Activated CD8-positive, alpha-beta T cell treated with anti-CD3 and anti-CD28 coated beads for 36 hours (primary cell): ENCODE measurements at regions of chr2 and their contacts with region 1.

Region 1: GRCh38 chr2:197168705-197169104 is 141.9 kb downstream of the ANKRD44 start:
- DNase-seq: peak; percentile 88
- ATAC-seq: peak; percentile 86
- H3K4me3 Mint-ChIP-seq: no peak overlapping the region
- H3K27ac Mint-ChIP-seq: peak overlapping the region; percentile 71
- H3K4me1 Mint-ChIP-seq: peaks cover 61% of the 10 kb centered on the region
- H3K27me3 Mint-ChIP-seq: no peaks in the 10 kb centered on the region
- CTCF ChIP-seq: peak; percentile 68

Region 2: GRCh38 chr2:197128126-197128525 is 40.6 kb before region 1 on chr2:
- CTCF ChIA-PET with region 1: interaction called, 39 read pairs
- POLR2A ChIA-PET with region 1: interaction called, 3 read pairs
- intact Hi-C with region 1: no loop called
- DNase-seq: no peak
- ATAC-seq: no peak
- H3K4me3 Mint-ChIP-seq: no peak overlapping the region
- H3K27ac Mint-ChIP-seq: peak overlapping the region; percentile 75
- H3K4me1 Mint-ChIP-seq: peaks cover 64% of the 10 kb centered on the region
- H3K27me3 Mint-ChIP-seq: no peaks in the 10 kb centered on the region
- CTCF ChIP-seq: no peak

Region 3: DNA sequence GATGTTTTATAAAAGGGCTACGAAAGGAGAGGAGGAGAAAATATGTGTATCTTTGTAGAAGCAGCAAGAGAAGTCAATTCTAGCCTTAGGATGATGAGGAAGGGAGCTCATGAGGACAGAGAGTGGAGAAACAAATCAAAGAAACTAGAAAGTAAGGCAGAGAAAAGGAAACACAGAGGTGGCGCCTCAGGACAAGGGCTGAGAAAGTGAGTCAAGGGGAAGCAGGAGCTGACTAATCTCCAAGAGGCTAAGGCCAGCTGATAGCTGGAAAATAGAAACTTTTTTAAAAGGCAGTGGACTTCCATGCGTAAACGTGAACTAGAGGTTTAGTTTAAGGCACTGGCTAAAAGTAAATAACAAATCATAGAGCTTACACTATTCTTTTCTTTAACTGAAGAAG is 31.5 kb before region 1 on chr2:
- CTCF ChIA-PET with region 1: interaction called, 39 read pairs
- POLR2A ChIA-PET with region 1: interaction called, 4 read pairs
- intact Hi-C with region 1: no loop called
- DNase-seq: no peak
- ATAC-seq: no peak
- H3K4me3 Mint-ChIP-seq: no peak overlapping the region
- H3K27ac Mint-ChIP-seq: peak overlapping the region; percentile 88
- H3K4me1 Mint-ChIP-seq: peaks cover 89% of the 10 kb centered on the region
- H3K27me3 Mint-ChIP-seq: no peaks in the 10 kb centered on the region
- CTCF ChIP-seq: no peak

Region 4: DNA sequence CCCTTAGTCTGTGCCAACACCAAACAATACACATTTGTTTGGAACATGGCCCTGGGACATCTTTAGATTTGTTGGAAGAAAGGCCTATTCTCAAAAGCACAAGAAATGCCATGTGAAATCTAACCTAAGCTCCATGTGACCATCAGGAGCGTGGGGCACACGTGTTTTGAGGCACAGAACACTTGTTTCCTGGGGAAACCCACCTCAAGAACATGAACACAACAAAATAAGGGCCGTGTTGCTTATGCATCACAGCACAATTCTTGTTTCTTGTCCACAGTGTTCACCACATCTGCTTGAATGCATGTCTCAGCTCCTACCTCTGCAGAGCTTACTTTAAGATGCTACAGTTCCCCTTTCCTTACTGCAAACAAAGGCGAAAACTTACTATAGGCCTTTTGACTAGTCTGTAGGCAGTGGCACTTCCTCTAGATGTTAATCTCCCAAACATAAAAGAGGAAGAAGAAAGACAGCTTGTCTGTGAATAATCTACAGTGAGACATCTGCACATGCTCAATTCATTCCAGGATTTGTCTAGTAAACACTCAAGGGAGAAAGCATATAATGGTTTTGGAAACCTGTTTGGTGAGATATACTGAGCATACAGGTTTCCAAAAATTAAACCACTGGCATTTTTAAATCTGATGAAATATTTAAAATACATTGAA is 23.1 kb before region 1 on chr2:
- CTCF ChIA-PET with region 1: interaction called, 10 read pairs
- POLR2A ChIA-PET with region 1: interaction called, 3 read pairs
- intact Hi-C with region 1: no loop called
- DNase-seq: peak; percentile 35
- ATAC-seq: peak; percentile 69
- H3K4me3 Mint-ChIP-seq: no peak overlapping the region
- H3K27ac Mint-ChIP-seq: peak overlapping the region; percentile 92
- H3K4me1 Mint-ChIP-seq: peaks cover 71% of the 10 kb centered on the region
- H3K27me3 Mint-ChIP-seq: no peaks in the 10 kb centered on the region
- CTCF ChIP-seq: no peak

Region 5: DNA sequence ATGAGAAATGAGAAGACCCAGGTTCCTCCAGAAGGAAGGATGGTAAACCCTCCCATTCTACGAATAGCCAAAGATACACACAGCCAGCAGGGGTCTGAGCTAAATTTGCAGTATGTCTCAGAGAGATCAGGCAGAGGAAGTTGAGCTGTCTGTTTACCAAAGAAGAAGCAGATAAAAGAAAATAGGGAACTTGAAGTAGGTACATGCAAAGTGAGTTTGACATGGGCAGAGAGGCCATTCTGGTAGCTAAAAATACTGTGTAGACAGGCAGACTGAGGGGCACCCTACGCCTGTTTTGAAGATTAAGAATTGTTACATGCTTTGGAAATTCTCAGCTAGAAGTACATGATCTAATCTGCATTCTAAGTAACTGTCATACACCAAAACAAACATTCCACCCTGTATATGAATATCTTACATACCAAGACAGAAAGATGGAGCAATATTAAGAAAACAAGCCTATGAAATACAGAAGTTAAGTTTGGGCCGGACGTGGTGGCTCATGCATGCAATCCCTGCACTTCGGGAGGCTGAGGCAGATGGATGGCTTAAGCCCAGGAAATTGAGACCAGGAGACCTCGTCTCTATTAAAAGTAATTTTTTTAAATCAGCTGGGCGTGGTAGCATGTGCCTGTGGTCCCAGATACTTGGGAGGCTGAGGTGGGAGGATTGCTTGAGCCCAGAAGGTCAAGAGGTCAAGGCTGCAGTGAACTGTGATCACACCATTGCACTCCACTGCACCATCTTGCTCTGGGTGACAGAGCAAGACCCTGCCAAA is 16.1 kb before region 1 on chr2:
- CTCF ChIA-PET with region 1: interaction called, 13 read pairs
- POLR2A ChIA-PET with region 1: interaction called, 3 read pairs
- intact Hi-C with region 1: no loop called
- DNase-seq: no peak
- ATAC-seq: peak; percentile 70
- H3K4me3 Mint-ChIP-seq: peak overlapping the region; percentile 25
- H3K27ac Mint-ChIP-seq: peak overlapping the region; percentile 88
- H3K4me1 Mint-ChIP-seq: peaks cover 75% of the 10 kb centered on the region
- H3K27me3 Mint-ChIP-seq: no peaks in the 10 kb centered on the region
- CTCF ChIP-seq: peak; percentile 34

Region 6: GRCh38 chr2:197179744-197180498 is 11.2 kb after region 1 on chr2:
- CTCF ChIA-PET with region 1: interaction called, 27 read pairs
- POLR2A ChIA-PET with region 1: no interaction called
- intact Hi-C with region 1: no loop called
- DNase-seq: no peak
- ATAC-seq: no peak
- H3K4me3 Mint-ChIP-seq: no peak overlapping the region
- H3K27ac Mint-ChIP-seq: peak overlapping the region; percentile 26
- H3K4me1 Mint-ChIP-seq: peaks cover 67% of the 10 kb centered on the region
- H3K27me3 Mint-ChIP-seq: no peaks in the 10 kb centered on the region
- CTCF ChIP-seq: no peak